ENCODE measurements at regions of chr20 and their contacts with region 1.

Region 1: DNA sequence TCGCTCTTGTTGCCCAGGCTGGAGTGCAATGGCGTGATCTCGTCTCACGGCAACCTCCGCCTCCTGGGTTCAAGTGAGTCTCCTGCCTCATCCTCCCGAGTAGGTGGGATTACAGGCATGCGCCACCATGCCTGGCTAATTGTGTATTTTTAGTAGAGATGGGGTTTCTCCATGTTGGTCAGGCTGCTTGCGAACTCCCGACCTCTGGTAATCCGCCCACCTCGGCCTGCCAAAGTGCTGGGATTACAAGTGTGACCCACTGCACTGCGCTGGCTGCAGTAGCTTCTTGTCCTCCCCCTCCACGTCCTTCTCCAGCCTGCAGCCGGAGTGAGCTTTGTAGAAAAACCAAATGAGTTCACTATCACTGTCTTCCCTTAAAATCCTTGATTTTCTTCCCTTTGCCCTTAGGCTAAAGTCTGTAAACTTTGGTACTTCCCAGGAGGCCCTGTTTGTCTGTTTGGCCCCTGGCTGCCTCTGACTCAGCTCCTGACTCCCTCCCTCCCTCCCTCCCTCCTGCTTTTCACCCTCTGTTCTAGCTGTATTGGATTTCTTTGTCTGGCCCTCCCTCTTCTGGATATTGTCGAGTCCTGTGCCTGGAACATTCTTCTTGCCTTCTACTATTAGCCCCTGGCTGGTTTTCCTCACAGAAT is 12.9 kb downstream of the PARD6B start:
- DNase-seq: peak; percentile 53 to 66 (median 63)
- ATAC-seq: peak; percentile 80
- H3K4me3 ChIP-seq: no peak overlapping the region
- H3K4me1 ChIP-seq: peaks cover 44% of the 10 kb centered on the region
- CTCF ChIP-seq: no peak

Region 2: DNA sequence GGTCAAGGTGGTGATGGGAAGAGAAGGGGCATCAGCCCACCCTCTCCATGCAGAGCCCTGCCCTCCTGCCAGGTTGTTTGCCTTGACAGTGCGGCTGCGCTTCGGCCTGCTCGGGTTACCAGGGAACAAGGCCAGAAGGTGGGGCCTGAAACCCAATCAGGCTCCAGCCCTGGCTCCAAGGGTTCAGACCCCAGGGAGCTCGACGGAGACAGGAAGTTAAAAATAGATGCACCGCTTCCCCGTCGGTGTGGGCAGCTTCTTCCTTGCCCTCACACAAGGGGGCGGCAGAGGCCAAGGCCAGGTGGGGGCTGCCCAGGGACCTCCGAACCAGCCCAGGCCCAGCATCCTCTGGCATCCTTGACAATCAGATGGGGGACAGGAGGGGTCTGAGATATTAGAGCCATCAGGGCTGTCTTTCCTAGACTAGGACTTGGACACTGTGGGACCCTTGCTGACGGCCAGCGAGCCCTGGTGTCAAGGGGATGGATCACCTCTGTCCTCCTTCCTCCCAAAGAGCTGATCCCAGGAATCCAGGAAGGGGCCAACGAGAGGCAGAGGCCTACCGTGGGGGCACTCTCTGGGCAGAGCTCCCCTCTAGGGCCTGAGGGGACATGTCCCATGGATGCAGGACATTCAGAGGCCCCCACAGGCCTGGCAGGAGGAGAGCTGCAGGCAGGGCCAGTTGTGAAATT is 118.1 kb before region 1 on chr20:
- intact Hi-C with region 1: loop called in 1 of 2 experiments (anchors 10 kb)
- DNase-seq: peak in 2 of 3 donors; percentile 26 to 57
- ATAC-seq: peak; percentile 44
- H3K4me3 ChIP-seq: no peak overlapping the region
- H3K4me1 ChIP-seq: no peaks in the 10 kb centered on the region
- CTCF ChIP-seq: no peak